Activated CD8-positive, alpha-beta T cell treated with anti-CD3 and anti-CD28 coated beads, Interleukin-2, amount 10 ng/mL, durations not matched to agents 7 days and 5 days (primary cell): ENCODE measurements at regions of chr1 and their contacts with region 1.

Region 1: DNA sequence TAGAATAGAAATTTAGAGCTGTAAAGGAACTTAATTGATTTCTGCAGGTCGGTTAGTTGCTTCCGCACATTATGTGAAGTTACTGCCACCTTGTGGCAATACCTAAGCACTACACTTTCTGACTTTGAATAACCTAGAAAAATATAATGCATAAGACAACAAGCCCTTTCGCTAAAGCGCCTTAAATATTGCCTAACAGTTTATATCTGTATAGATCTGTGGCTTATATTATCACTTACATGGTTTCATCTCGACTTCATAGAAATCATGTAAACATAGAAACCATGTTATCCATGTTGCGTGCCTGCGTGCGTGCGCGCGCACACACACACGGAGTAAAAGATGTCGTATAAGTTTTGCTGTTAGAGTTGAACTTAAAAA is 10.9 kb upstream of the IFI16 start:
- DNase-seq: peak; percentile 69
- ATAC-seq: peak; percentile 73
- H3K4me3 Mint-ChIP-seq: no peak overlapping the region
- H3K27ac Mint-ChIP-seq: no peak overlapping the region
- H3K4me1 Mint-ChIP-seq: peaks cover 22% of the 10 kb centered on the region
- H3K27me3 Mint-ChIP-seq: no peaks in the 10 kb centered on the region

Region 2: DNA sequence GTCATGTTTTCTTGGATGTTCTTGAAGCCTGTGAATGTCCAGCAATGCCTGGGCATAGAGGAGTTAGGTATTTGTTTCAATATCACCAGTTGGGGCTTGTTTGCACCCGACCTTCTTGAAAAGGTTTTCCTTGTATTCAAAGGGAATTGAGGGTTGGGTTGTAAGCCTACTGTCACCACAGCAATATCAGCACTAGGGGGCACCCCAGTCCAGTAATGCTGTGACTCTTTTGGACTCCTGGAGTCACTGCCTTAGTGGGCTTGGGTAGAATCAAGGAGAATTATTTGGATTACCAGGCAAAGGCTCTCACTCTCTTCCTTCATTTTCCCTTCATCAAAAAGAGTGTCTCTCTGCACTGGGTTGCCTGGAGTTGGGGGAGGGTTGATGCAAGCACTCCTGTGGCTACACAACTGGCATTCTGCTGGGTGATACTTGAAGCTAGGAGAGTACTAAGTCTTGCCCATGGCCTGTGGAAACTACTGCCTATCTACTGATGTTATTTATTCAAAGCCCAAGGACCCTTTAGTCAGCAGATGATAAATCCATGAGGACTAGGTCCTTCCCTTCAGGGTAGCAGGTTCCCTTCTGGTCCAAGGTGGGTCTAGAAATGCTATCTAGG is 492.3 kb before region 1 on chr1:
- CTCF ChIA-PET with region 1: interaction called, 12 read pairs
- POLR2A ChIA-PET with region 1: no interaction called
- DNase-seq: peak; percentile 34
- ATAC-seq: no peak
- H3K4me3 Mint-ChIP-seq: no peak overlapping the region
- H3K27ac Mint-ChIP-seq: no peak overlapping the region
- H3K4me1 Mint-ChIP-seq: no peaks in the 10 kb centered on the region
- H3K27me3 Mint-ChIP-seq: peaks cover 13% of the 10 kb centered on the region

Region 3: DNA sequence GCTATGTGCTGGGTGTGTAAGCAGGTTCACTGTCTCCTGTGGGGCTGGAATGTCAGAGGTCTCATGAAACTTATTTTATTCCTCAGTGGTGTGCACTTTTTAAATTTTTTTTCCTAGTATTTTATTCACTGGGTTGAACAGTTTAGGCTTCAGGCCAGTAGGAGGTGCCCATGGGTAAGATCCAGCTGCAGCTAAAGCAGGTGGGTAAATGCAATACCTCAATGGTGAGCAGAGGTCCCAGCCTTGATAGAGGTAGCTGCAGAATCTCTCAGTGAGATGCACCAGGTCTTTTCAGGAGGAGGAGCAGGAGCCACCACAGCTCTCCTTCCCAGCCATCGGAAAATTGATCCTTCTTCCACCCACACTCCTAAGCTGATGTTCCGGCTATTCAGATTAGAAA is 205.2 kb before region 1 on chr1:
- CTCF ChIA-PET with region 1: interaction called, 13 read pairs
- POLR2A ChIA-PET with region 1: no interaction called
- DNase-seq: no peak
- ATAC-seq: no peak
- H3K4me3 Mint-ChIP-seq: no peak overlapping the region
- H3K27ac Mint-ChIP-seq: no peak overlapping the region
- H3K4me1 Mint-ChIP-seq: no peaks in the 10 kb centered on the region
- H3K27me3 Mint-ChIP-seq: peaks cover 11% of the 10 kb centered on the region

Region 4: DNA sequence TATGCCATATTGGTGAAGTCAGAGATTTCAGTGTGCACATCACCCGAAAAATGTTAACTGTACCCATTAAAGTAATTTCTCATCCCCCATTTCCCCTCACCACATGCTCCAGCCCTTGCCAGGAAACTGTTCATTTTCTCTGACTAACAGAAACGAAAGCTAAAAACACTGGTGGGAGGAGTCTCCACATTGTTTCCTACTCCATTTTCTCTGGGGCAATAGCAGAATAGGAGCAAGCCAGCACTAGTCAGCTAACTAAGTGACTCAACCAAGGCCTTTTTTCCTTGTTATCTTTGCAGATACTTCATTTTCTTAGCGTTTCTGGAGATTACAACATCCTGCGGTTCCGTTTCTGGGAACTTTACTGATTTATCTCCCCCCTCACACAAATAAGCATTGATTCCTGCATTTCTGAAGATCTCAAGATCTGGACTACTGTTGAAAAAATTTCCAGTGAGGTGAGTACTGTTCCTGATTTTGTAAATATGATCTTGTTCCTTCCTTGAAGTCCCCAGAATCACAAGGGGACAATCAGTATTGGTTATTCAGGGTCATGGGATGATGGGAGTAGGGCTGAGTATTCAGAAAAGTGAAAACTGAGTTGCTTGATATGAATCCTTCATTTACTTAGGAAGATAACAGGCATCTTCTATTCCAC is 11.1 kb after region 1 on chr1 and contains the start of gene IFI16:
- CTCF ChIA-PET with region 1: interaction called, 20 read pairs
- POLR2A ChIA-PET with region 1: interaction called, 24 read pairs
- DNase-seq: peak; percentile 85
- ATAC-seq: peak; percentile 66
- H3K4me3 Mint-ChIP-seq: peak within 1 kb of the TSS; percentile 88
- H3K27ac Mint-ChIP-seq: peak within 1 kb of the TSS; percentile 94
- H3K4me1 Mint-ChIP-seq: peaks cover 44% of the 10 kb centered on the region
- H3K27me3 Mint-ChIP-seq: no peaks in the 10 kb centered on the region
- total RNA-seq, gene IFI16: 308 to 314 TPM

Region 5: DNA sequence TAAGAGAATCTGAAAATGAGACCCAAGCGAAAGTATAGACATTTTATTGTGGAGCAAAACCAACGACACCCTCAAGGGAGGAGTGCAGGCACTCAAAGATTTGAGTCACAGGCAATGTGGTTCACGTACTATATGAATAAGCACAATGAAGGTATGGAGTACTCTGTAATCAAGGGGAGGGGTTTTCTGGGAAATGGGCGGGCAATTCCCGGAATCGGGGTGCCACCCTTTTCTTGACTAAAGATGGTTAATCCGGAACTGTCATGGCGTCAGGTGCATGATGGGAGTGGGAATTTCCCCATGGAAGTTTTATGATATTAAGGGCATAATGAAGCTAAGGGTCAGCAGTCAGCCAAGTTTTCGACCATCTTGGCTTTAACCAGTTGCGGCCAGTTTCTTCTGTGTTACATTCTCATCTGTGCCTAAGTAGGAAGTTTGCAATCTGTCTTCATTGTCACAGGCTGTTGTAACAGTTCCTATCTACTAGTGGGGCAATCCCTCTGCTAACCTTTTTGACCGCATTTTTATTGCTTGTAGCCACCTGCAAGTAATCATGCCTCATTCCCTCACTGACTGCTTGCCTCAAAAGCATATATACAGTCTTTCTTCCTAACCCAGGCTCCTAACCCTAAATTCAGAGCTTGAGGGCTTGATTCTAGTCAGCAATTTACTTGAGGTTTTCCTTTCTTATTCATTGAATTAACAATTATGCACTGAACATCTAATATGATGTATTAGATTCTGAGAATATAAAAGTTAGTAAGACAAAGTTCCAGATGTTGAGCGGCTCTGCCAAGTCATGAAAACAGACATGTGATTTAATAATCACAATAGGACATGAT is 78.6 kb after region 1 on chr1:
- CTCF ChIA-PET with region 1: interaction called, 11 read pairs
- POLR2A ChIA-PET with region 1: no interaction called
- DNase-seq: peak; percentile 94
- ATAC-seq: peak; percentile 90
- H3K4me3 Mint-ChIP-seq: peak overlapping the region; percentile 75
- H3K27ac Mint-ChIP-seq: peak overlapping the region; percentile 97
- H3K4me1 Mint-ChIP-seq: peaks cover 21% of the 10 kb centered on the region
- H3K27me3 Mint-ChIP-seq: peaks cover 11% of the 10 kb centered on the region